Dendritic cell treated with granulocyte-macrophage colony-stimulating factor and Interleukin-4, amounts not matched to agents 40 ng/mL and 50 ng/mL, for 4 days (primary cell): ENCODE measurements at regions of chr3 and their contacts with region 1.

Region 1: DNA sequence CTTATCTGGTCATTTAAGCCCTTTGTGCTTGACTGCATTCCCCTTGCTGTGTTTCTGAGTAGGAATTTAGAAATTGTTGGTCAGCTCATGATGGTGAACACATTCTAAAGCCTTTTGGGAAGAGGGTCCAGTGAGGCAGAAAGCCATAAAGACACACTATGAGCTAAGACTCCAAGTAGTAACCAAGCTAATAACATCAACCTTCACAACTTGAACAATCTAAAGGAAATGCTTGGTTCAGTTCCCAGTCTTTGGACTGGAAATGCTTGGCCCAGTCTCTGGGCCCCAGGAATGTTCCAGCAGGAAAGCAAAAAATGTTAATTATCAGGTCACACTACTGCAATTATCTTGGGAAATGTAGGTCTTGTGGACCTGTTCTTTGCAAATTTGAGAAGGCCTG is 7.7 kb downstream of the PLSCR1 start:
- H3K4me3 Mint-ChIP-seq: no peak overlapping the region
- H3K27ac Mint-ChIP-seq: no peak overlapping the region
- H3K4me1 Mint-ChIP-seq: peaks cover 38% of the 10 kb centered on the region
- H3K27me3 Mint-ChIP-seq: no peaks in the 10 kb centered on the region

Region 2: GRCh38 chr3:146513386-146514051 is 23.2 kb before region 1 on chr3:
- intact Hi-C with region 1: loop called (anchors 1 kb)
- H3K4me3 Mint-ChIP-seq: no peak overlapping the region
- H3K27ac Mint-ChIP-seq: peak overlapping the region; percentile 47
- H3K4me1 Mint-ChIP-seq: peaks cover 31% of the 10 kb centered on the region
- H3K27me3 Mint-ChIP-seq: no peaks in the 10 kb centered on the region